Activated B cell treated with CpG ODN at 0.5 μM for 24 hours (primary cell): ENCODE measurements at regions of chr6 and their contacts with region 1.

Region 1: DNA sequence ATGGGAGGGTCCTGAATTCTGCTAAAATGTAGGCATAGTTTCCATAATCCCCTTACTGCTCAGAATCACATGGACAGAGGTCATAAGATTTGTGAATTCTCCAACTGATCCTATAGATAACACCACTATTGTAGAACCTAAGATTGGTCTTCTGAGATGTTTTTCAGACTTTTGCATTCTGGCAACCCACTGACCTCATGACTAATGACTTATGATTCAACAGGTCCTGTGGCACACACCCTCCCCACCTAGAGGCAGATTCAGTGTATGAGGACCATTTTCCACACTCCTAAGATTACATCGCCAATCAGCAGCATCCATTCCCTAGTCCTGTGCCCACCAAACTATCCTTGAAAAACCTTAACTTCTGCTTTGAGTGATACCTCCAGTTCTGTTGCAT is 207.2 kb downstream of the BTBD9 start:
- DNase-seq: no peak
- ATAC-seq: no peak
- H3K4me3 Mint-ChIP-seq: no peak overlapping the region
- H3K27ac Mint-ChIP-seq: no peak overlapping the region
- H3K4me1 Mint-ChIP-seq: peaks cover 52% of the 10 kb centered on the region
- H3K27me3 Mint-ChIP-seq: no peaks in the 10 kb centered on the region
- CTCF ChIP-seq: no peak

Region 2: GRCh38 chr6:38552121-38552520 is 119.6 kb after region 1 on chr6:
- CTCF ChIA-PET with region 1: no interaction called
- POLR2A ChIA-PET with region 1: no interaction called
- intact Hi-C with region 1: loop called (anchors 5 kb)
- DNase-seq: no peak
- ATAC-seq: peak; percentile 97
- H3K4me3 Mint-ChIP-seq: no peak overlapping the region
- H3K27ac Mint-ChIP-seq: no peak overlapping the region
- H3K4me1 Mint-ChIP-seq: peaks cover 6% of the 10 kb centered on the region
- H3K27me3 Mint-ChIP-seq: no peaks in the 10 kb centered on the region
- CTCF ChIP-seq: no peak